ENCODE measurements at regions of chr6 and their contacts with region 1.

Region 1: GRCh38 chr6:41705996-41706835 is 29.2 kb downstream of the TFEB start:
- DNase-seq: peak; percentile 83
- ATAC-seq: peak; percentile 81
- H3K4me3 Mint-ChIP-seq: peak overlapping the region; percentile 89
- H3K27ac Mint-ChIP-seq: peak overlapping the region; percentile 97
- H3K4me1 Mint-ChIP-seq: peaks cover 99% of the 10 kb centered on the region
- H3K27me3 Mint-ChIP-seq: no peaks in the 10 kb centered on the region
- CTCF ChIP-seq: peak; percentile 54

Region 2: GRCh38 chr6:41470331-41471063 is 235.7 kb before region 1 on chr6:
- CTCF ChIA-PET with region 1: no interaction called
- POLR2A ChIA-PET with region 1: interaction called, 15 read pairs
- intact Hi-C with region 1: no loop called
- DNase-seq: no peak
- ATAC-seq: peak; percentile 45
- H3K4me3 Mint-ChIP-seq: peak overlapping the region; percentile 66
- H3K27ac Mint-ChIP-seq: no peak overlapping the region
- H3K4me1 Mint-ChIP-seq: peaks cover 20% of the 10 kb centered on the region
- H3K27me3 Mint-ChIP-seq: peaks cover 54% of the 10 kb centered on the region
- CTCF ChIP-seq: no peak

Region 3: GRCh38 chr6:41659935-41660505 is 46.2 kb before region 1 on chr6:
- CTCF ChIA-PET with region 1: no interaction called
- POLR2A ChIA-PET with region 1: no interaction called
- intact Hi-C with region 1: no loop called
- DNase-seq: no peak
- ATAC-seq: no peak
- H3K4me3 Mint-ChIP-seq: no peak overlapping the region
- H3K27ac Mint-ChIP-seq: no peak overlapping the region
- H3K4me1 Mint-ChIP-seq: no peaks in the 10 kb centered on the region
- H3K27me3 Mint-ChIP-seq: peaks cover 29% of the 10 kb centered on the region
- CTCF ChIP-seq: no peak

Region 4: DNA sequence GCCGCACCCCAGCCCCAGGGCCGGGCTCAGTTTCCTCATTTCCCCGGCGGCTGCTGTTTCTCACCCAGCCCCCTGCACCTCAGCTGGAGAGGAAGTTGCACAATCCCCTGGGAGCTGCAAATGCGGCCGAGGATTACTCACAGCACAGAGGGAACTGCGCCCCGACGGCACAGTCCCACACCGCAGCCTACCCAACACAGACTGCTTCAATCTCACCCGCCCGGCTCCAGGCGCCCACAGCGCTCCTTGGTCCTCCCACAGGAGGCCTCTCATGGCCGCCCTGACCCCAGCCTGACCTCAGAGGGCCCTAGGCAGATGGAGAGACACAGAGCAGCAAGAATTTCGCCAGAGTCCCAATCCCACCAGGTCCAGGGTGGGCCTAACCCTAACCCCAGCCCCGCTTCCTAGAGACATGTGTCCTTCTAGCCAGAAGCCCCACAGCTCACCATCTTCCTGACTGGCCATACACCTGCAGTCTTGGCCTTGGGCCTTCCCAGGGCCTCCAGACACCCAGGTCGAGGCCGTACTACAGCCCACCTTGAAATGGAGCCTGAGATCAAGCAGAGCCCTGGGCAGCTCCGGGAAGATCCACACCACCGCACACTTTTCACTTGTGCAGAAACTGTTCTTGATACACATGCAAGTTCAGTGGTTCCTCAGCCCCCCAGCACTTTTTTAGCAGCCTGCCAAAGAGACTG is 17.5 kb after region 1 on chr6:
- CTCF ChIA-PET with region 1: interaction called, 81 read pairs
- POLR2A ChIA-PET with region 1: interaction called, 1,669 read pairs
- intact Hi-C with region 1: loop called (anchors 1 kb)
- DNase-seq: peak; percentile 76
- ATAC-seq: peak; percentile 86
- H3K4me3 Mint-ChIP-seq: peak overlapping the region; percentile 92
- H3K27ac Mint-ChIP-seq: peak overlapping the region; percentile 99
- H3K4me1 Mint-ChIP-seq: peaks cover 97% of the 10 kb centered on the region
- H3K27me3 Mint-ChIP-seq: no peaks in the 10 kb centered on the region
- CTCF ChIP-seq: no peak

Region 5: GRCh38 chr6:41747256-41748101 is 41.3 kb after region 1 on chr6 and contains the start of gene PGC:
- CTCF ChIA-PET with region 1: no interaction called
- POLR2A ChIA-PET with region 1: no interaction called
- intact Hi-C with region 1: no loop called
- DNase-seq: no peak
- ATAC-seq: no peak
- H3K4me3 Mint-ChIP-seq: no peak within 1 kb of the TSS
- H3K27ac Mint-ChIP-seq: no peak within 1 kb of the TSS
- H3K4me1 Mint-ChIP-seq: no peaks in the 10 kb centered on the region
- H3K27me3 Mint-ChIP-seq: no peaks in the 10 kb centered on the region
- CTCF ChIP-seq: no peak
- total RNA-seq, gene PGC: not detected in 2 replicates